ENCODE measurements at regions of chr9 and their contacts with region 1.

Region 1: GRCh38 chr9:2857564-2858198 is 13.8 kb upstream of the PUM3 start:
- DNase-seq: peak in 1 of 2 donors; percentile 82
- ATAC-seq: peak; percentile 73 to 83 (median 80)
- H3K4me3 ChIP-seq: no peak overlapping the region
- H3K4me3 Mint-ChIP-seq: no peak overlapping the region
- H3K27ac ChIP-seq: no peak overlapping the region
- H3K27ac Mint-ChIP-seq: no peak overlapping the region
- H3K4me1 ChIP-seq: no peaks in the 10 kb centered on the region
- H3K4me1 Mint-ChIP-seq: peaks cover 0 to 4% of the 10 kb centered on the region in 2 donors
- H3K27me3 ChIP-seq: peaks cover 3% of the 10 kb centered on the region
- H3K27me3 Mint-ChIP-seq: peaks cover 20 to 41% of the 10 kb centered on the region in 2 donors
- CTCF ChIP-seq: peak; percentile 91

Region 2: GRCh38 chr9:2620919-2621679 is 236.6 kb before region 1 on chr9:
- intact Hi-C with region 1: no loop called
- DNase-seq: peak; percentile 24 to 30
- ATAC-seq: peak; percentile 51 to 59 (median 58)
- H3K4me3 ChIP-seq: peak overlapping the region; percentile 1
- H3K4me3 Mint-ChIP-seq: peak overlapping the region; percentile 94
- H3K27ac ChIP-seq: no peak overlapping the region
- H3K27ac Mint-ChIP-seq: peak overlapping the region in 1 of 2 donors; percentile 76
- H3K4me1 ChIP-seq: peaks cover 18% of the 10 kb centered on the region
- H3K4me1 Mint-ChIP-seq: peaks cover 18 to 28% of the 10 kb centered on the region in 2 donors
- H3K27me3 ChIP-seq: peaks cover 14% of the 10 kb centered on the region
- H3K27me3 Mint-ChIP-seq: peaks cover 17 to 52% of the 10 kb centered on the region in 2 donors
- CTCF ChIP-seq: no peak

Region 3: DNA sequence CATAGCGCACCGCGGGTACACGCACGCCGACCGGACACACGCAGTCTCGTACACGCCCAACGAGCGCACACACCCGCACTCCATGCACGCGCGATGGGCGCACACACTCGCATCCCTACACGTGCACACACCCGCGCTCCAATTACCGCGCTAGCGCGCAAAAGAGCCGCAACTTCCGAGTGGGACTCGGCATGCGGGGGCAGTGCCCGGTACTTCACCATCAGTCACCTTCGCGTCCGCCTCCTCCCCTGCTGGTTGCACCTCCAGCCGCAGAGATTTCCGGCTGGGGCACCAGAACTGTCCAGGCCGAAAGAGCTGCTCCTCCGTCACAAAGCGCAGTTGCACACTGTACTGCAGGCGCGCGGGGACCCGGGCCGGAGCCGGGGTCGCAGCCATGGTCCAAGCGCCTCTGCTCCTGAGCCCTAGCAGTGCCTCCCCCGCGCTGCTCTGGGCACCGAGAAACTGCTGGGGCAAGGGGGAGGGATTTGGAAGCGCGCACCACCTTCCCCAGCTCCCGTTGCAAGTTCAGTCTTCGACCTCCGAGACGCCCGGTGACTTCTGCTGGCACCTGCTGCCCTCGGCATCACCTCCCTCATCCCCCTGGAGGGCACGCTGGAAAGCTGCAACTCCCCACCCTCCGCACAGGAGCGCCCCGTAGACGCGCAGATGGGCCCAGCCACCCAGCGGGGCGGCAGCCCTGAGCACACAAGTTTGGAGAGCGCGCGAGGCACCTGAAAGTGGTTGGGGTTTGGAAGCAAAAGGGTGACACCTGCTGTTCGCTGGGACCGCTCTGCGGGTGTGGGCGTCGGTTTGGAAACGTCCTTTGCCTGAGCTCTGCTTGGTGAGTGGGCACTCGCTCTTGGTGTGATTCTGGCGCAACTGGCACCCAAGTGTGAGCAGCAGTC is 323.6 kb after region 1 on chr9:
- intact Hi-C with region 1: loop called (anchors 5 kb)
- DNase-seq: peak in 1 of 2 donors; percentile 46
- ATAC-seq: peak in 2 of 3 donors; percentile 27 to 41
- H3K4me3 ChIP-seq: no peak overlapping the region
- H3K4me3 Mint-ChIP-seq: no peak overlapping the region
- H3K27ac ChIP-seq: no peak overlapping the region
- H3K27ac Mint-ChIP-seq: no peak overlapping the region
- H3K4me1 ChIP-seq: peaks cover 12% of the 10 kb centered on the region
- H3K4me1 Mint-ChIP-seq: peaks cover 0 to 8% of the 10 kb centered on the region in 2 donors
- H3K27me3 ChIP-seq: peaks cover 9% of the 10 kb centered on the region
- H3K27me3 Mint-ChIP-seq: peaks cover 29 to 50% of the 10 kb centered on the region in 2 donors
- CTCF ChIP-seq: no peak

Region 4: DNA sequence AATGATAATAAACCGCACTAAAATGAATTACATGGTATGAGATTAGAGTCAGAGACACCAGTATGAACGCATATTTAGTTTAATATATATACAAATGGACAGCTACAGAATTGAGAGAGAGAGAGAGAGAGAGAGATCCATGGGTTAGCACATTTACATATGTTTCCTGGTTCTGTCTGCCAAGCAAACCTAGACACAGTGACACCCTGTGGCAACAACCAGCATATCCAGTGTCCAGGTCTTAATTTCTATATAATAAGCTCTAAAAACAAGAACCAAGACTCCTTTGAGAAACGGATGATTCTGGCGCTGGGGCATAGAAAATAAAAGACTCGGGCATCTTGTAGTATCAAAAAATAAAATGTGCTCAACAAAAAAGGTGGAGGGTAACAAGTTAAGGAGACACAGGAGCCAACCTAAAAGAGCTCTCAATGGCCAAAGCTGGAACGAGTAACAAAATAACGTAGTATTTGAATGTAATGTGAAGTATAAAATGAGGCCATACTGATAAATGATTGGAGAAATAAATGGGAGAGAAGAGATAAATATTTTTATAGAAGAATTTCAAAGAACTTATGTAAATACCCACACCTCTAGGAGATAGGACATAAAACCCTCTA is 583.6 kb after region 1 on chr9:
- intact Hi-C with region 1: loop called (anchors 5 kb)
- DNase-seq: peak in 1 of 2 donors; percentile 72
- ATAC-seq: peak; percentile 79 to 94 (median 93)
- H3K4me3 ChIP-seq: no peak overlapping the region
- H3K4me3 Mint-ChIP-seq: no peak overlapping the region
- H3K27ac ChIP-seq: no peak overlapping the region
- H3K27ac Mint-ChIP-seq: no peak overlapping the region
- H3K4me1 ChIP-seq: no peaks in the 10 kb centered on the region
- H3K4me1 Mint-ChIP-seq: peaks cover 12% of the 10 kb centered on the region in 2 donors
- H3K27me3 ChIP-seq: no peaks in the 10 kb centered on the region
- H3K27me3 Mint-ChIP-seq: no peaks in the 10 kb centered on the region
- CTCF ChIP-seq: peak; percentile 65

Region 5: DNA sequence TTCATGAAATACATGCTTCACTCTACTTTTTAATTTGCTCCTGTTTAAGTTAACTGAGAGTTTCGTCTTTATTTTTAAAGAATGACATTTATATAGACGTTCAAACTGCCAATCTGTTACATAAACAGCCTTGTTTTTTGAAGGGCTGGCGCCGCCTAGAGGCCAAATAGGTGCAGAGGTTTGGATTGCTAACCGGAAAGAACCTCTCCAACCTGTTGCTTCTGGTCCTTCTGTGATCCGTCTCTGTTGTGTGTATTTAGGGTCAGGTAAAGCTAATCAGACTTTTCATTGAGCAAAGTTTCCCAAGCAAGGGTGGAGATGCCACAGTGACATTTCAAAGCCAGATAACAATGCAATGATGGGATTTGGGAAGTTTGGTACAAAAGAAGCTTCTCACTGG is 1481.7 kb after region 1 on chr9:
- intact Hi-C with region 1: loop called (anchors 5 kb)
- DNase-seq: peak; percentile 56 to 86
- ATAC-seq: peak; percentile 72 to 84 (median 72)
- H3K4me3 ChIP-seq: no peak overlapping the region
- H3K4me3 Mint-ChIP-seq: peak overlapping the region; percentile 10
- H3K27ac ChIP-seq: no peak overlapping the region
- H3K27ac Mint-ChIP-seq: peak overlapping the region in 1 of 2 donors; percentile 47
- H3K4me1 ChIP-seq: no peaks in the 10 kb centered on the region
- H3K4me1 Mint-ChIP-seq: peaks cover 5% of the 10 kb centered on the region in 2 donors
- H3K27me3 ChIP-seq: no peaks in the 10 kb centered on the region
- H3K27me3 Mint-ChIP-seq: peaks cover 6 to 12% of the 10 kb centered on the region in 2 donors
- CTCF ChIP-seq: peak; percentile 72